Cardiac septum (tissue), 1 donor: ENCODE measurements at regions of chr2 and their contacts with region 1.

Region 1: GRCh38 chr2:46010925-46011490 is 286.2 kb upstream of the EPAS1 start:
- DNase-seq: no peak

Region 2: DNA sequence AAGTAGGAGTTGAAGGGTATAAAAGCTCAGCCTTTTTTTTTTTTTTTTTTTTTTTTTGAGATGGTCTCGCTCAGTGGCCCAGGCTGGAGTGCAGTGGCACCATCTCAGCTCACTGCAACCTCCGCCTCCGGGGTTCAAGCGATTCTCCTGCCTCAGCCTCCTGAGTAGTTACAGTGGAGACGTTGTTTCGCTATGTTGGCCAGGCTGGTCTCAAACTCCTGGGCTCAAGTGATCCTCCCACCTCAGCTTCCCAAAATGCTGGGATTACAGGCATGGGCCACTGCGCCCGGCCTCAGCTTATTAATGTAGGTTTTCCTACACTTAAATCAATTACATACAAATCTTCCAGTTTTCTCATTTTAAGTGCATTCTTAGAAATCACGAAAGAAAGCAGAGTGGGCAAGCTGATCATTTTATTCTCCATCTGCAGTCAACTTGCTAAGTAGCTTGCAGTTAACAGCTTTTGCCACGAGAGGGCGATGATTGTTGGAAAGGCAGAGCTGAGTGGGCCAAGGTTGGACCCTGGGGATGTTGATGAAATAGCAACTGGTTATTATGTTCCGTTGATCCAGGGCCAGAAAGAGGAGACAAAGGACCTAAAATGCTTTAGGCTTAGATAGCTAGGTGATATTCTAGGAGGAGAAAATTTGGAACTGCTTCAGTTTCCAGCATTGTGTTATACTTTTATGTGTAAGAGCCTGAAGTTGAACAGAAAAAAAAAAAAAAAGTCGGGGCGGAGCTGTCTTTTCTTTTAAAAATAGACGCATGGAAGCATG is 51.8 kb after region 1 on chr2:
- intact Hi-C with region 1: loop called (anchors 5 kb)
- DNase-seq: peak; percentile 90

Region 3: GRCh38 chr2:46198154-46198853 is 187.3 kb after region 1 on chr2:
- intact Hi-C with region 1: no loop called
- DNase-seq: no peak

Region 4: GRCh38 chr2:46364797-46365457 is 353.9 kb after region 1 on chr2:
- intact Hi-C with region 1: loop called (anchors 5 kb)
- DNase-seq: no peak

Region 5: GRCh38 chr2:46461011-46461674 is 450.1 kb after region 1 on chr2:
- intact Hi-C with region 1: loop called (anchors 2 kb)
- DNase-seq: peak; percentile 90